Posterior vena cava (tissue), 2 donors: ENCODE measurements at regions of chr9 and their contacts with region 1.

Region 1: DNA sequence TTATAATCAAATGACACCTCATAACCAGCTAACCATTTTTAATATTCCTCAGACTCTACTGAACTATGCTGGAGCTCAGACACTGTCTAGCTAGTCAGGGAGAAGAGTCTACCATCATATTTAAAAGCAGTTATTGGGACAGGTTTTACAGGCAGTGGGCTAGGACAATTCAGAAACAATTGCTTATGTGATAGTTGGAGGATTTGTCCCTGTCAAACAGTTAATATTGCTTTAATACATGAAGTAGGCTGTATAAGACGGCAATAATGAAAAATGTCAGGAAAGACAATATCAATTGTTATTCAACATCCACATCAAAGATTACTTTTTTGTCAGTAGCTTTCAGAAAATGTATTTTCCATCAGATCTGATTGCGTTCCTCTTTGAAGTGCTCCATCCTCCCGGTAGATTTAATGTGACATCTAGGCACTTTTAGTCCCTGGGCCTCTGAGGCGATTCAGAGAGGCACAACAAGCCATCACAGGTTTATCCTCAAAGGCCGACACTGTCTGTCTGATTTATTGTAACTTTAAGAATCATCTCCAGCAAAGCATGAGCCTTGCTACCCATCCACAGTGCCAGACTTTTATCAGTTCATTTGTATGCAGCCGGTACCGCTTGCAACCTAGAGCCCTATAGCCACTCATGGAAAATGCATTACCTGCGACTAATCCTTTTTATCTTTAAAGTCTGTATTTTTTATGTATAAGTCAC is 152.2 kb downstream of the PSAT1 start:
- DNase-seq: no peak

Region 2: GRCh38 chr9:78365748-78366697 is 83.1 kb before region 1 on chr9:
- intact Hi-C with region 1: no loop called
- DNase-seq: no peak

Region 3: DNA sequence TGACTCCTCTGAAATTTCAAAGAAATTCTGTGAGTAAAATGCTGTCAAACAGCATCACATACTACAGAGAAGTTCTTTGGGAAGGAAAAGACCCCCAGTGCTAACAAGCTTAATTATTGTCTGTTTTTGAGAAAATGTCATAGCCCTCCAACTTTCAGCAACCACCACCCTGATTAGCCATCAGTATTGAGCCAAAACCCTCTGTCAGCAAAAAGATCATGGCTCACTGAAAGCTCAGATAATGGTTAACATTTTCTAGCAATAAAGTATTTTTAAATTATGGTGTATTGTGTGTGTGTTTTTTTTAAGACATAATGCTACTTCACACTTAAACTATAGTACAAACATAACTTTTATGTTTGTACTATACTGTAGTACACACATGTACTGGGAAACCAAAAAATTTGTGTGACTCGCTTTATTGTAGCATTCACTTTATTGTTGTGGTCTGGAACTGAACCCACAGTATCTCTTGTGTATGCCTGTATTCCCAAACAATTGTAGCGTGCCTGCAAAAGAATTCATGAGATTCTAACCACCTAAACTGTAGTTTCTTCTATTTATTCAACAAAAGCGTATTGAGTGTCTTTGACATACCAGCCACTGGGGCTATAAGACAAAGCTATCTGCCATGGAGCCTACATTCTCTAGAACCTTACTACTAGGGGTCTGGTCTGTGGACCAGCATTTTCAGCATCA is 1154.3 kb after region 1 on chr9:
- intact Hi-C with region 1: loop called in 1 of 2 experiments (anchors 5 kb)
- DNase-seq: no peak

Region 4: DNA sequence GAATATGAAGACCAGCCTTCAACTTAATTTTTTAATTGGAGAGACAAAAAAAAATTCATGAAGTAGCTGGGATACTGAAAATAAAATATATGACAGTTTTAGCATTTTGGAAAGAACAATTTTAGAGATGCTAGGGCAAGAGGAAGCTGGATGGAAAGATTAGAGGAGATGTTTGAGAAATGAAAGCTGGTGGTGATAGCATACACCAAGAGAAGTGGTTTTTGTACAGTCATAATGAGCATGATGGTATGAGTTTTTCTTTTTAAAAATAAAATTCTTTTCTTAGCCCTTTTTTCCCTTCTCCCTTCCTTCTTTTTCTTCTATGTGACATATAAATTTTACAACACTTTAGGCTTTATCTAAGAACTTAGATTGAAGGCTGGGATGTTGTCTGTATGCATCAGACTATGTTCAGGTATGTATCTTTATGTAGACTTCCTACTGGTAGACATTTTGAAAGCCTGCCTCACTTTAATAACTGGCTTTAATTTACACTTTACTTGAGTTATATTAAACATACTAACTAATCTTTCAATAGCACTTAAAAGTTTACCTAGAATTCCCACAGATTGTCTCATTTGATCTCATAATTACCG is 1645.2 kb after region 1 on chr9:
- intact Hi-C with region 1: no loop called
- DNase-seq: no peak